ENCODE measurements at regions of chr20 and their contacts with region 1.

Region 1: DNA sequence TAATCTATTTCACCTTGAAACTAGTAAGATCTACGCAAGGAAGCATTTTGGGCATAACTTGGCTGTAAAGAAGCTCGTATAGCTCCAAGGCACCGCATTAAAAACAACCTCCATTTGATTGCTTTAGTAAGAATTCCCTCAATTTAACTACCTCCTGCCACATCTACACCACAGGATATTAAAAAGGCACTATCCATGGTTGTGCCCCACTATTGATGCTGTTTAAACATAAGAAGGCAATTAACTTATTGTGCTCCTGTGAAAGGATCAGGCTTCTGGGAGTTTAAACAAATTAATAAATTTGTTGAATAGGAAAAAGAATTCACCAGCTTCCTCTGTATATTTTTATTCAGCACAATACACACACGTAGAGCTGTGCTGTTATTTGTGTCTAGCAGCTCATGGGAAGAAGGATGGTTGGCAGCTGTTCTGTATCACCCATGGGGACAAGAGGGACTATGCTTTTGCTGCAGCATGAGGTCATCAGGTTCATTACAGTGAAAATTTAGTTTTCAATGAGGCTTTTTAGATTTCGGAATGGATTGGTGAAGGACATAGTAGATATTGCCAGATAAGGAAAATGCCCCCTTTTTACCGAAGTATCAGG is 513.3 kb downstream of the HAO1 start:
- DNase-seq: no peak
- ATAC-seq: no peak

Region 2: GRCh38 chr20:7490288-7490687 is 63.3 kb after region 1 on chr20:
- intact Hi-C with region 1: loop called in 1 of 2 experiments (anchors 2 kb)
- DNase-seq: no peak
- ATAC-seq: no peak

Measured in left colon (tissue), 2 donors.